MCF 10A (cell line): ENCODE measurements at regions of chr21 and their contacts with region 1.

Region 1: GRCh38 chr21:43611598-43612369 is 47.5 kb downstream of the HSF2BP start:
- DNase-seq: peak; percentile 79
- H3K4me3 Mint-ChIP-seq: no peak overlapping the region
- H3K27ac Mint-ChIP-seq: peak overlapping the region; percentile 88
- H3K4me1 Mint-ChIP-seq: peaks cover 35% of the 10 kb centered on the region
- H3K27me3 Mint-ChIP-seq: no peaks in the 10 kb centered on the region
- CTCF ChIP-seq: peak; percentile 67

Region 2: DNA sequence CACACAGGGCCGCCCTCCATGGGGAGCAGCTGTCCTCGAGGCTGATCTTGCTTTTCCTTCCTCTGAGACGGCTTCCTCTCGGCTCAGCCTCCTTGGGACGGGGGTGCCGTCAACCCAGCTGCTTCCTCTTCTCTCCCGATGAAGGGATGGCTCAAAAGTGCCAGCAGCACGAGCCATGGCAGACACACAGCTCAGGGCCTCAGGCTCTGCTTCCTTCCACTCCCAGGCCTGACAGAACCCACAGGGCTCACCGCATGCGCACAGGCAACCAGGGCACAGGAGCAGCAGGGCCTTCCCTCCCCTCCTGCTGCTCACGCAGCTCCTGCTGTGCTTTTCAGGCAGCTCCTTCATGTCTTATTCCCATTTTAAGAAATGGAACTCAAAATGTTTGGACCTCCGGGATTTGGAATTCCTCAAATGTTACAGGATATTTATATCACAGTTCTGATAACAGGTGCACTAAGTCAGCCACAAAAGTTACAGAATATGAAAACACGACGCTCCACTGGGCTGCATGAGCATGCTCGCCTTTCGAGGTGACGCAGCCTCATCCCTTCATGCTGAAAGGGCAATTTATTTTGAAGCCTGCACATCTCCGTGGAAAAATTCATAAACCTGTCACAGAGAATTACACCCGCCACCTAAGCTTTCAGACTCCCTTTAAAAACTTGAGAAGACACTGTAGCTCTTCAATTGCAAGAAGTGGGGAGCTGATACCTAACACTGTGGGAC is 36.9 kb before region 1 on chr21:
- CTCF ChIA-PET with region 1: no interaction called
- POLR2A ChIA-PET with region 1: no interaction called
- intact Hi-C with region 1: no loop called
- DNase-seq: no peak
- H3K4me3 Mint-ChIP-seq: no peak overlapping the region
- H3K27ac Mint-ChIP-seq: peak overlapping the region; percentile 2
- H3K4me1 Mint-ChIP-seq: peaks cover 21% of the 10 kb centered on the region
- H3K27me3 Mint-ChIP-seq: no peaks in the 10 kb centered on the region
- CTCF ChIP-seq: no peak

Region 3: GRCh38 chr21:43585924-43586424 is 25.8 kb before region 1 on chr21:
- CTCF ChIA-PET with region 1: interaction called, 5 read pairs
- POLR2A ChIA-PET with region 1: interaction called, 8 read pairs
- intact Hi-C with region 1: loop called (anchors 1 kb)
- DNase-seq: peak; percentile 100
- H3K4me3 Mint-ChIP-seq: peak overlapping the region; percentile 49
- H3K27ac Mint-ChIP-seq: peak overlapping the region; percentile 96
- H3K4me1 Mint-ChIP-seq: peaks cover 38% of the 10 kb centered on the region
- H3K27me3 Mint-ChIP-seq: no peaks in the 10 kb centered on the region
- CTCF ChIP-seq: no peak

Region 4: GRCh38 chr21:43600642-43601402 is 11.0 kb before region 1 on chr21:
- CTCF ChIA-PET with region 1: interaction called, 10 read pairs
- POLR2A ChIA-PET with region 1: interaction called, 6 read pairs
- intact Hi-C with region 1: no loop called
- DNase-seq: peak; percentile 70
- H3K4me3 Mint-ChIP-seq: peak overlapping the region; percentile 44
- H3K27ac Mint-ChIP-seq: no peak overlapping the region
- H3K4me1 Mint-ChIP-seq: peaks cover 39% of the 10 kb centered on the region
- H3K27me3 Mint-ChIP-seq: no peaks in the 10 kb centered on the region
- CTCF ChIP-seq: no peak

Region 5: DNA sequence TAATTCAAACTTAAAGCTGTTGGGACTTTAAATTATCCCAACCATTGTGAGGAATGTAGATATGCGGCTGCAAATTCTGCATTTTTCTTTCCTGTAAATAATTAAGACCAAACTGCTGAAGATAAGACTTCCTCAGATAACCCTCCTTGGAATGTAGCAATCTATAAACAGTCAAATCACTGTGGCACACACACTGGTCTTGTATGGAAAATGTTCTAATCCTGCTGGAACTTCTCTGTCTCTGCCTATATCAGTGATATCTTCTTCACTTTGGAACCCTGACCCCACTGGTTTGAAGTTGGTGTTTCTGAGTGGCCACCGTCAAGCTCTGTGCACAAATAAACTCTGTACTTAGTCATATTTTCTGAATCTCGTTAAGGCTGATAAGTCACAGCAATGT is 14.6 kb after region 1 on chr21:
- CTCF ChIA-PET with region 1: interaction called, 15 read pairs
- POLR2A ChIA-PET with region 1: interaction called, 3 read pairs
- intact Hi-C with region 1: no loop called
- DNase-seq: no peak
- H3K4me3 Mint-ChIP-seq: no peak overlapping the region
- H3K27ac Mint-ChIP-seq: no peak overlapping the region
- H3K4me1 Mint-ChIP-seq: peaks cover 24% of the 10 kb centered on the region
- H3K27me3 Mint-ChIP-seq: no peaks in the 10 kb centered on the region
- CTCF ChIP-seq: no peak

Region 6: GRCh38 chr21:43646550-43647260 is 34.9 kb after region 1 on chr21:
- CTCF ChIA-PET with region 1: interaction called, 44 read pairs
- POLR2A ChIA-PET with region 1: interaction called, 17 read pairs
- intact Hi-C with region 1: loop called (anchors 1 kb)
- DNase-seq: peak; percentile 96
- H3K4me3 Mint-ChIP-seq: peak overlapping the region; percentile 50
- H3K27ac Mint-ChIP-seq: peak overlapping the region; percentile 88
- H3K4me1 Mint-ChIP-seq: peaks cover 26% of the 10 kb centered on the region
- H3K27me3 Mint-ChIP-seq: no peaks in the 10 kb centered on the region
- CTCF ChIP-seq: peak; percentile 97

Region 7: GRCh38 chr21:43728467-43729390 is 116.9 kb after region 1 on chr21:
- CTCF ChIA-PET with region 1: no interaction called
- POLR2A ChIA-PET with region 1: no interaction called
- intact Hi-C with region 1: no loop called
- DNase-seq: peak; percentile 94
- H3K4me3 Mint-ChIP-seq: peak overlapping the region; percentile 69
- H3K27ac Mint-ChIP-seq: peak overlapping the region; percentile 86
- H3K4me1 Mint-ChIP-seq: peaks cover 58% of the 10 kb centered on the region
- H3K27me3 Mint-ChIP-seq: no peaks in the 10 kb centered on the region
- CTCF ChIP-seq: no peak